ENCODE measurements at regions of chr17 and their contacts with region 1.

Region 1: DNA sequence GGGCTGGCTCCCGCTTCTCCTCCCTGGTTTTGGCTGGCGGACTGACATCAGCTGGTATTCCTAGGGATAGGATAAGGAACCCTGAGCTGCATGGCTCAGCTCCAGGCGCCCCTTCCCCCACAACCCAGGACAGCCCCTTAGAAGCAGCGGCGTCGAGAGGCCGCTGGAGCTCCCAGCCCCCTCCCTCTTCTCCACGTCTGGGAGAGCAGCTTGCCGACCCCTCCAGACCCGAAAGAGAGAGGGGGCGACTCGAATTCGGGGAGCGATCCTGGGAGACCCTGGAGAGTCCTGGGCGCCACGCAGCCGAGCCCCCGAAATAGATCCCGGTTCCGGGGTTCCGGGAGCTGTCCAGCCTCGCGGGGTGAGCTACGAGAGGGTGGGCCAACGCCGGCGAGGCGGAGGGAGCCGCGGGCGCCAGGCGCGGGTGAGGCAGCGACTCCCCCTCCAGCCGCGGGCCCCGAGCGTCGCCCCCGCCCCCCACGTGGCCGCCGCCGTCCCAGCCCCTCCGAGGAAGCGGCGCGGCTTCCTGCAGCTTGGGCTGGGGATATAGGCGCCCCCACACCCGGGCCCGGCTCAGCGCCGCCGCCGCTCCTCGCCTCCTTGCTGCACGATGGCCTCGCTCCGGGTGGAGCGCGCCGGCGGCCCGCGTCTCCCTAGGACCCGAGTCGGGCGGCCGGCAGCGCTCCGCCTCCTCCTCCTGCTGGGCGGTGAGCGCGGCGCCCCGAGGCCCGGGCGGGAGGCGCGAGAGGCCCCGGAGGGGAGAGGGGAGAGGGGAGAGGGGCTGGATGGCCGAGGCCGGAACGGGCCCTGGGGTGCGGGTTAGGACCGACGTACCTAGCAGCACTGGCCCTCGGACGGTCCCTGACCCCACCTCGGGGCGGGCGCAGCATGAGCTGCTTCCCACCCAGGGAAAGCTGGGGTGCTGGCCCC is at the start of gene RAMP2:
- DNase-seq: peak; percentile 51
- ATAC-seq: peak; percentile 60
- H3K4me3 Mint-ChIP-seq: peak within 1 kb of the TSS; percentile 67
- H3K27ac Mint-ChIP-seq: no peak within 1 kb of the TSS
- H3K4me1 Mint-ChIP-seq: peaks cover 25% of the 10 kb centered on the region
- H3K27me3 Mint-ChIP-seq: peaks cover 55% of the 10 kb centered on the region
- CTCF ChIP-seq: no peak
- total RNA-seq, gene RAMP2: 10.9 to 13.1 TPM (median 11.6 TPM) in 3 replicates

Region 2: GRCh38 chr17:42554250-42555121 is 206.4 kb before region 1 on chr17:
- CTCF ChIA-PET with region 1: interaction called, 12 read pairs
- POLR2A ChIA-PET with region 1: no interaction called
- DNase-seq: peak; percentile 93
- ATAC-seq: peak; percentile 81
- H3K4me3 Mint-ChIP-seq: peak overlapping the region; percentile 85
- H3K27ac Mint-ChIP-seq: peak overlapping the region; percentile 79
- H3K4me1 Mint-ChIP-seq: peaks cover 12% of the 10 kb centered on the region
- H3K27me3 Mint-ChIP-seq: no peaks in the 10 kb centered on the region
- CTCF ChIP-seq: no peak

Region 3: DNA sequence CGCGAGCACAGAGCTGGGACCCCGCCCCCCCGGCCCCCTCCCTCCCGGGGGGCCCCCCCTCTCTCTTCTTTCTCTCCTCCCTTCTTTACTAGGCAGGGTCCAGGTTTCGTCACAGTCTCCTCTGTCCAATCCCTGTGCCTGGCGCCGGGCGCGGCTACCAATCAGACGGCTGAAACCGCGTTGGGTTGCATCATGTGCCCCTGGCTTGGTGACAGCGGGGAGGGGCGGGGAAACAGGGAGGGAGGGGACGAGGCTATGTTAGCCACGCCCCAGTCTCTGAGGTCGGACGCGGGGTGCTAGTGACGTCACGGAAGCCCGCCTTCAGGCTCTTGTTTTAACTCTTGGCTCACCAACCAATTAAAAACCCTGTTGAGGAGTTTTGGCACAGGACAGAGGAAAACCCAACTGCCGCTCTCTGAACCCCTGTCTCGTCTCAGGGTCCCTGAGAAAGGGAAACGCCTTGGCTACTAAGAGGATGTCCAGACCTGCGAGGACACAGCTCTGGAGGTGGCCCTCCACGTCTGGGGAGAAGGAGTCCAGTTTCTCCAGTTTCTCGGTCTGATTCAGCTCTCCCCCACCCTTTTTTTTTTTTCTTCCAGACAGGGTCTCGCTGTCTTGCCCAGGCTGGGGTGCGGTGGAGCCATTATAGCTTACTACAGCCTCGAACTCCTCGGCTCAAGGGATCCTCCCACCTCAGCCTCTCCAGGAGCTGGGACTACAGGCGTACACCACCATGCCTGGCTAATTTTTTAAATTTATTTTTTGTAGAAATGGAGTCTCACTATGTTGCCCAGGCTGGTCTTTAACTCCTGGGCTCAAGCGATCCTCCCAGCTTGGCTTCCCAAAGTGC is 83.7 kb before region 1 on chr17:
- CTCF ChIA-PET with region 1: interaction called, 16 read pairs
- POLR2A ChIA-PET with region 1: interaction called, 3 read pairs
- DNase-seq: peak; percentile 100
- ATAC-seq: peak; percentile 68
- H3K4me3 Mint-ChIP-seq: peak overlapping the region; percentile 79
- H3K27ac Mint-ChIP-seq: peak overlapping the region; percentile 94
- H3K4me1 Mint-ChIP-seq: peaks cover 40% of the 10 kb centered on the region
- H3K27me3 Mint-ChIP-seq: peaks cover 8% of the 10 kb centered on the region
- CTCF ChIP-seq: no peak

Region 4: DNA sequence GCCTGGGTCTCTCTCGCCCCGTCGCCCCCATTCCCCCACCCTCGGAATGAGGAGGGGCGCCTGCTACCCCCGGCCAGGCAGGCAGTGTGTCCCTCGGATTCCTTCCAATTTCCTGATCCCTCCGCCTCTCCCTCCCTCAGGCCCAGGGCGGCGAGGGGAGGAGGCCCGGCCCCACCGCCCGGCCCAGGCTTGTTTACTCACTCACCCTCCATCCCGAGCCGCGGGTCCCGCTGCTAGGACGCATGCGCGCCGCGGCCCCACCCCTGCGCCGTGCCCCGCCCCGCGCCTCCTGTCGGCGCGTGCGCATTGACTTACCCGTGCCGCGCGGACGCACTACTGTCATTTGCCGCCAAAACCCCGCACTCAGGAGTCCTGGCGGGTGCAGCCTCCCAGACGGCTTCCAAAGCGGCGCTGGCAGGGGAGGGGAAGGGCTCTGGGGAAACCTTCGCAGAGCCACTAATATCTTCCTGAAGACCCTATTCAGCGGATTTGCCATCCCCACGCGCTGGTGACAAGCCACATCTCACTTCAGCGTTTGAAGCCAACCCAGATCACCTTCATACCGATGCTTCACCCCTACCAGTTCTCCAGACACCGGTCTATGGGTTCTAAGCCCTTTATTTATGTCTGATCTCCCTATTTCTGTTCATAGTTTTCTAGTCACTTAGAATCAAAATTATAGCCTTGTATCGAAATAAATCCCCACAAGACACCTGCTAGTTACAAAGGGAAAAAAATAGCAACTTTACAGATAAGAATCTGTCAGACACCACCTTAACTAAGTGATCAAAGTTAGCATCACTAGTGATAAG is 15.9 kb before region 1 on chr17 and contains the start of gene EZH1:
- CTCF ChIA-PET with region 1: interaction called, 117 read pairs
- POLR2A ChIA-PET with region 1: interaction called, 6 read pairs
- DNase-seq: peak; percentile 94
- ATAC-seq: peak; percentile 93
- H3K4me3 Mint-ChIP-seq: peak within 1 kb of the TSS; percentile 86
- H3K27ac Mint-ChIP-seq: peak within 1 kb of the TSS; percentile 96
- H3K4me1 Mint-ChIP-seq: peaks cover 36% of the 10 kb centered on the region
- H3K27me3 Mint-ChIP-seq: peaks cover 27% of the 10 kb centered on the region
- CTCF ChIP-seq: no peak
- total RNA-seq, gene EZH1: 19.8 to 24.1 TPM (median 22.4 TPM) in 3 replicates

Region 5: DNA sequence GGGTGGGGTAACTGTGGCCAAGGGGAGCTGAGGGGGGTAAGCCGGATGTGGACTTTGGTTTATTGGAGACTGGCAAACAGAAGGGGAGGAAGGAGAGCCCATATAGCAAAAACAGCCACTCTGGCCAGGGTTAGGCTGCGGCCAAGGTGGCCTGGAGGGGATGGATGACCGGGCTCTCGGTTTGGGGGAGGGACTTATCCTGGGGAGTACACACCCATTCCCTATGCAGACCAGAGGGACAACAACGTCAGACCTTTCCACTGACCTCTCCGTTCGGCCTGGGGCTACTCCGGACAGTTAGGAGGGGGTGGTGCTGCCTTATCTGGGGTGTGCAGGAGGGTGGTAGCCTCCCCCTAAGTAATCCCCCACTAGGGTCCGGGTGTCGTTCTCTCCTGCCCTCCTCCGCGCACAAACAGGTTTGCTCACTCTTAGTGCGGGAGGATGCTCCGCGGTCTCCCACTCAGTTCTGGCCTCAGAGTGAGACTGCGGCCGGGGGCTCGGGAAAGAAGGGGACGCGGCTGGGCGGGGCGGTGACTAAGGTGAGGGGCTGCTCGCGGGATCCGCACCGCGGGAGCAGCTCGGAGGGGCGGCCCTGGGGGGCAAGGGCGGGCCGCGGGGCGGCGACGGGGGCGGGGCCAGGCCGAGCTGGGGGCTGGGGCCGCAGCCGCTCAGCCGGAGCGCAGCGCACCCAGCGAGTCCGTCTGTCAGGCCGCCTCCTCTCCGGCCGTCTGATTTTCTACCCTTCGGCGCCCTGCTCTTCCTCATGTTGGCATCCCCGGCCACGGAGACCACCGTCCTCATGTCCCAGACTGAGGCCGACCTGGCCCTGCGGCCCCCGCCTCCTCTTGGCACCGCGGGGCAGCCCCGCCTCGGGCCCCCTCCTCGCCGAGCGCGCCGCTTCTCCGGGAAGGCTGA is 19.3 kb after region 1 on chr17 and contains the start of gene WNK4:
- CTCF ChIA-PET with region 1: interaction called, 39 read pairs
- POLR2A ChIA-PET with region 1: no interaction called
- DNase-seq: peak; percentile 66
- ATAC-seq: peak; percentile 71
- H3K4me3 Mint-ChIP-seq: peak within 1 kb of the TSS; percentile 70
- H3K27ac Mint-ChIP-seq: peak within 1 kb of the TSS; percentile 54
- H3K4me1 Mint-ChIP-seq: peaks cover 20% of the 10 kb centered on the region
- H3K27me3 Mint-ChIP-seq: peaks cover 41% of the 10 kb centered on the region
- CTCF ChIP-seq: no peak
- total RNA-seq, gene WNK4: 1.4 to 1.7 TPM (median 1.5 TPM) in 3 replicates

Region 6: DNA sequence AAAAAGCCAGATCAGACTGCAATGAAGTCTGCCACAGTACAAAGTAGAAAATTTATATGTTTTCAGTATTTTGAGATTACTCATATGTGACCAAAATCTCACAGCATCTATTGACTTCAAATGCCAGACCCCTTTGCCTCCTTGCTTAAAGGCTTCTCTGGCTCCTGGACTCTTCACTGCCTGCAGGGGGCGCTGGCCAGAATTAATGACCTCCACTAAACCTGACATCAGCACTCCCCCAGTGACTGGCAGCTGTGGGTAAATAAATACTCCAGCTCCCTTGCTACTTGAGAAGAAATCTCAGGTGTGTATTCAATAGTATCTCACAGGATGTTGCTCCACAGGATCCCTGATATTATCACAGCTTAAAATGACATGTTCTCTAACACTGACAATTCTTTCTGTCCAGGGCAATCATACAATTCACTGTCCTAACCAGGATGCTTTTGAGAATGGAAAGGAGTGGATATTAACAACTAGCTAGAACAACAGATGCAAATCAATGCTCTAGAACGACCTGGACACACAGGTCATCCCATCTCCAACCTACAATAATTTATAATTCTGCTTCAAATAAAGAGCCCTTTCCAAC is 59.1 kb after region 1 on chr17:
- CTCF ChIA-PET with region 1: interaction called, 25 read pairs
- POLR2A ChIA-PET with region 1: no interaction called
- DNase-seq: peak; percentile 84
- ATAC-seq: peak; percentile 39
- H3K4me3 Mint-ChIP-seq: no peak overlapping the region
- H3K27ac Mint-ChIP-seq: peak overlapping the region; percentile 71
- H3K4me1 Mint-ChIP-seq: peaks cover 7% of the 10 kb centered on the region
- H3K27me3 Mint-ChIP-seq: no peaks in the 10 kb centered on the region
- CTCF ChIP-seq: peak; percentile 72

Region 7: GRCh38 chr17:42997984-42998938 is 237.3 kb after region 1 on chr17 and contains the start of gene RPL27:
- CTCF ChIA-PET with region 1: interaction called, 10 read pairs
- POLR2A ChIA-PET with region 1: no interaction called
- DNase-seq: peak; percentile 96
- ATAC-seq: peak; percentile 96
- H3K4me3 Mint-ChIP-seq: peak within 1 kb of the TSS; percentile 100
- H3K27ac Mint-ChIP-seq: peak within 1 kb of the TSS; percentile 99
- H3K4me1 Mint-ChIP-seq: peaks cover 31% of the 10 kb centered on the region
- H3K27me3 Mint-ChIP-seq: no peaks in the 10 kb centered on the region; the same call in 1 of the 2 replicates
- CTCF ChIP-seq: peak; percentile 77
- total RNA-seq, gene RPL27: 1,391 to 1,553 TPM (median 1,518 TPM) in 3 replicates

Region 8: GRCh38 chr17:43010667-43011308 is 249.9 kb after region 1 on chr17:
- CTCF ChIA-PET with region 1: no interaction called
- POLR2A ChIA-PET with region 1: no interaction called
- DNase-seq: no peak
- ATAC-seq: no peak
- H3K4me3 Mint-ChIP-seq: no peak overlapping the region
- H3K27ac Mint-ChIP-seq: no peak overlapping the region
- H3K4me1 Mint-ChIP-seq: peaks cover 36% of the 10 kb centered on the region
- H3K27me3 Mint-ChIP-seq: no peaks in the 10 kb centered on the region
- CTCF ChIP-seq: no peak